CD4-positive, alpha-beta T cell (primary cell): ENCODE measurements at regions of chr7 and their contacts with region 1.

Region 1: DNA sequence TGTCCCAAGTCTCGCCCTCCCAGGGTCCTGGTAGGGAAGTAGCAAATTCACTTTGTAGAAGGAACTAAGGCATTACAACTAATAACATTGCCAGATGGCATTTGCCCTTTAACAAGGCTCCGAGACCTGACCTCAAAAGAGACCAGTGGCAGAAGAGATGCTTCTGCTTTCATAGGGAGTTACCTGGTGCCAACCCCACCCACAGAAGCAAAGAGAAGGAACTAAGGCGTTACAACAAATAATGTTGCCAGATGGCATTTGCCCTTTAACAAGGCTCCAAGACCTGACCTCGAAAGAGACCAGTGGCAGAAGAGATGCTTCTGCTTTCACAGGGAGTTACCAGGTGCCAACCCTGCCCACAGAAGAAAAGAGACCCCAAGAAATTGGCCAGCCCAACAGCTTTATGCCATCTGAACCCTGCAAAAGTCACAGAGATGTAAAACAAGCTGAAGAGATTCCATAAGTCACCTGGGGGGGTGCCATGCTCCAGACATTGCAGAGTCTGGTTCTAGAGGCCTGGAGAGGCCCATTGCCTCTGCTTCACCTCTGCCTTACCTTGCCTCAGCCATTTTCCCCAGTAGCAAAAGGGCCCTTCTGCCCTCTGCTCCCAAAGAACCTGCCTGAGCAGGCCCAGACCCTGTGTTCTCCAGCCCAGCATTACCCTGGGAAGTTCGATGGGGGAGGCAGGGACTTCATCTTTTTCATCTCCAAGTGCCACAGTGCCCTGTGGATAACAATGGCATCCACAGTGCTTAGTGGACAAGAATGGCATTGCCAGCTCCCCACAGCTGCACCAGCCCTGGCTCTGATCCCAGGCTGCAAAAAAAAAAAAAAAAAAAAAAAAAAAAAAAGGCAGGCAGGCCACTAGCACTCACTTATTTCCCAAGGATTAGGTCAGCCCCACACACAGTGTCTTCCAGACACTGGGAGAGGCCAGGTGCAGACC is 179.5 kb upstream of the PLXNA4 start:
- DNase-seq: peak in 1 of 14 experiments; percentile 9
- ATAC-seq: no peak
- H3K4me3 ChIP-seq: no peak overlapping the region
- H3K4me3 Mint-ChIP-seq: no peak overlapping the region
- H3K27ac ChIP-seq: no peak overlapping the region
- H3K27ac Mint-ChIP-seq: no peak overlapping the region
- H3K4me1 ChIP-seq: peaks cover 5% of the 10 kb centered on the region
- H3K4me1 Mint-ChIP-seq: peaks cover 5% of the 10 kb centered on the region
- H3K27me3 ChIP-seq: no peaks in the 10 kb centered on the region
- H3K27me3 Mint-ChIP-seq: peaks cover under 1% of the 10 kb centered on the region
- CTCF ChIP-seq: no peak

Region 2: DNA sequence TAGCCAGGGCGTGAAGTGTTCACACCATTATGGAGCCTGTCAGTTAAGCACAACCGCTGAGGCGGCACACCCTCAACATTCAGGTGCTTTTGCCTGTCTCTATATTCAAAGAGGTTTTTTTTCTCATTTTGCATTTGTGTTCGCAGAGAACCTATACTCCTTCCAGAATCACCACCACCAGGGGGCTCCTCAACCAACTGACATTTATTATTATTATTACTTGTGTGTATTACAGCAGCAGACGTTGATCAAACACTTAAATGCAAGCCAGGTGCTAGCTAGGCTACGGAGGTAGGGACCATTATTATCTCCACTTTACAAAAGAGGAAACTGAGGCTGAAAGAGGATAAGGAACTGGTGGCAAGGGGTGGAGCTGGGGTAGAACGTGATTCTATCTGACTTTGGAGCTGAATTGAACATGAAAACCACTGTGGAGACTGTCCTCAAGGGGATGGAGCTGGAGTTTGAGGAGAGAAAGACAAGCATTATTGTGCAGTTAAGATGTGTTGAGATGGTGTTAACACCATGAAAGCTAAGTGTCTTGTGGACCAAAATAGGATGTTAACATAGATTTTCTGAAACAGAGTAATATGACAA is 45.7 kb before region 1 on chr7:
- CTCF ChIA-PET with region 1: no interaction called
- POLR2A ChIA-PET with region 1: no interaction called
- intact Hi-C with region 1: loop called in 1 of 2 experiments (anchors 5 kb)
- DNase-seq: peak in 6 of 14 experiments; percentile 2 to 36 (median 28)
- ATAC-seq: no peak
- H3K4me3 ChIP-seq: no peak overlapping the region
- H3K4me3 Mint-ChIP-seq: no peak overlapping the region
- H3K27ac ChIP-seq: no peak overlapping the region
- H3K27ac Mint-ChIP-seq: no peak overlapping the region
- H3K4me1 ChIP-seq: no peaks in the 10 kb centered on the region
- H3K4me1 Mint-ChIP-seq: no peaks in the 10 kb centered on the region
- H3K27me3 ChIP-seq: peaks cover 0 to 3% of the 10 kb centered on the region in 2 experiments
- H3K27me3 Mint-ChIP-seq: no peaks in the 10 kb centered on the region
- CTCF ChIP-seq: no peak

Region 3: DNA sequence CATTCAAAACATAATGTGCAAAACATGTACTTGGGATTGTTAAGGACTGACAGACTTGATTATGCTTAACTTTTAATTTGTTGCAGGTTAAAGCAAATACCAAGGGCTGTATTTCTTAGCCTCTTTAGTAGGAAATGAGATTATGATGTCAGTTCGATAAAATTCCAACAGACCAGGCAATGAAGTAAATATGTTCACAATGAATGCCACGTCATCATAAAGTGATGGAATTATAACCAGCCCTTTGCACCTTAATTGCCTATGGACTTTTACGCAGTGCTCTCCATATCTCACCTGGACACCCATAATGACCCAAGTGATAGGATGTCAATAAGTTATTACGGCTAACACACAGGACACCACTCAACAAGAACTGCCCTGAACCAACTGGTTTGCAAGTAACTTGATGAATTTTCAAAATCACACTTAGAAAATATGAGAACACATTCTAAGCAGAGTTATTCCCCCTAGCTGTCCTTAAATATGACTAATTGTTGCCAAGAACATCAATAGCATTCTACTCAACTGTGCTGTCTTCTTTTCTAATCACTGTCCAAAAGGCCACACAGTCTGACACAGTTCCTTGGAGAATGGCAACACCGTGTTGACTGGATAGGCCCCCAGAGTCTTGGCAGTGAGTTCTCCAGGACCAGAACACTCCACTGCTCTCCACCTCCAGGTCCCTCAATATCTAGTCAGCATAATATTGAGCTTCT is 211.1 kb after region 1 on chr7:
- CTCF ChIA-PET with region 1: no interaction called
- POLR2A ChIA-PET with region 1: no interaction called
- intact Hi-C with region 1: no loop called
- DNase-seq: no peak
- ATAC-seq: no peak
- H3K4me3 ChIP-seq: no peak overlapping the region
- H3K4me3 Mint-ChIP-seq: no peak overlapping the region
- H3K27ac ChIP-seq: no peak overlapping the region
- H3K27ac Mint-ChIP-seq: no peak overlapping the region
- H3K4me1 ChIP-seq: no peaks in the 10 kb centered on the region
- H3K4me1 Mint-ChIP-seq: peaks cover 5% of the 10 kb centered on the region
- H3K27me3 ChIP-seq: no peaks in the 10 kb centered on the region
- H3K27me3 Mint-ChIP-seq: no peaks in the 10 kb centered on the region
- CTCF ChIP-seq: no peak